Left lung (tissue), 14 donors: ENCODE measurements at regions of chr3 and their contacts with region 1.

Region 1: DNA sequence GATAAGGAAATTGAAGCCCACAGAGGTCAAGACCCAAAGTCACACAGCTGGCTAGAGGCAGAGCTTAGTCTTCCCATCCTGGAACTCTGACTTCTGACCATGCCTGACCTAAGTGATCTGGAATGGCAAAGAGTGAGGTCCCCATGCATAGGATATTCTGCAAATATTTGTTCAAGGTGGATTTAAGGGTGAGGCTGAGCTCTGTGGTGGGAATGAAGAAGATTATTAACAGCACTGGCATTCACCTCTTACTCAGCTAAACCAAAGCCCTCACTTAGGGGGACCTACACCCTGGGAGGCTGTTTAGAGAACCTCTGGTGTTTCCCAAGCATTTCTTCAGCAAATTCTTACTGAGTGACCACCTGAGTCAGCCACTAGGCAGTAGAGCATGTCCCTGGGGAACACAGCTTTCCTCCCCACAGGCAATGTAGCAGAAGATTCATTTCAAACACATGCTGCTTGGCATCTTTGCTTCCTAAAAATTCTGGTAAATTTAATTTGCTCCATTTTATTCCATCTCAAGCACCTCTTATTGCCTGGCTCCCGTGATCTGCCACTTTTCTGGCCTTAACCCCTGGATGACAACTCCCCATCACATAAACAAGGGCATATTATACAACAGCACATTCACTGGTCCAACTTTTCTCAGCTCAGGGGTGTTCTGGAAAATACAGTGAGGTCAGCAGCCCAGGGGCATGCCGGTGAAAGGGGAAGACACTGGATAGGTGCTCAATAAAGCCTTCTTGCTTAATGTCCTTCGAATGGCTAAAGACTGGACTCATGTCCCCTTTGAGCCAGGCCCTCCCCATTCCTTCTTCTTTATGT is 176.0 kb downstream of the ABHD5 start:
- DNase-seq: no peak
- ATAC-seq: peak; percentile 9
- H3K4me3 ChIP-seq: no peak overlapping the region
- H3K27ac ChIP-seq: no peak overlapping the region
- H3K4me1 ChIP-seq: peaks cover 0 to 3% of the 10 kb centered on the region in 2 donors
- H3K27me3 ChIP-seq: peaks cover 0 to 11% of the 10 kb centered on the region in 2 donors
- CTCF ChIP-seq: no peak

Region 2: DNA sequence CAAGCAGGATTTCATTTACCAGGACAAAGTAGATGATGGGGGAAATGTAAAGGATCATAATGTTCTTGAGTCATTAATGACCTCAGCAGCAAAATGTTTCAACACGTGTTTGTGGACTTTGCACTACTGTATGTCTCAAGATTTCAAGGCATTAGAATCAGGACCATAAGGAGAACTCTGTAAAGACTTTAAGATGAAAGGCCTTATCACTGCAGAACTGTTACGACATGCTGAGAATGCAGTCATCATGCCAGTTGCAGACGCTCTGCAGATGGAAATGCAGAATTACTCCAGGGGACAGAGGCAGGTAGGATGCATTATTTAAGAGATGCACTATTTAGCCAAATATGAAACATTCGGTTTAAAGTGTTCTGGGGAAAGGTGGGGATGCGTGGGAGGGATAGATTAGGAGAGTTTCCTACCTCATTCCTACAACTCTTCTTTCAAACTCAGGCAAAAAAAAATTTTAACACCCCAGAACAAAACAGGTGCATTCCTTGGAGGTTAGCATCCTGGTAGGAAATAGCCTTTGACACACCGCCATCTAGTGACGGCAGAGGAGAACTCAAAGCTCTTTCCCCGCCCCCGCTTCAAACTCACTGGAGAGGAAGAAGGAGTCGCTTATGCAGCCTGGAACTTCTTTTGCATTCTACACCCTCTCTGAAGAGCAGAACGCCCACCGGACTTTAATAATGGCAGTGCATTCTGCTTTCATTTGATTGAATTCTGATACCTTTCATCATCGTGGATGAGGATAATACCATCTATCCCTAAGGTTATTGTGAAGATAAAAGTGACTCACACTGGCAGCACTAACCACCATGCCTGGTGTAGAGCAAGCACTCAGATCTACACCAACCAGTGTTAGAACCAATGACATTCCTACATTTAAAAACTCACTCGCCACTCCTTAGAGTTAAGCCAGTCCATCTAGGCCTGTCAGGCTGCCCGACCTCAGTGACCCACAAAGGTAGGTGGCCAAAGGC is 331.8 kb after region 1 on chr3:
- intact Hi-C with region 1: loop called in 1 of 2 experiments (anchors 10 kb)
- DNase-seq: peak in 3 of 4 donors; percentile 55 to 75 (median 57)
- ATAC-seq: peak; percentile 99
- H3K4me3 ChIP-seq: no peak overlapping the region
- H3K27ac ChIP-seq: no peak overlapping the region
- H3K4me1 ChIP-seq: no peaks in the 10 kb centered on the region
- H3K27me3 ChIP-seq: no peaks in the 10 kb centered on the region
- CTCF ChIP-seq: peak; percentile 75 to 81